ENCODE measurements at regions of chr10 and their contacts with region 1.

Region 1: DNA sequence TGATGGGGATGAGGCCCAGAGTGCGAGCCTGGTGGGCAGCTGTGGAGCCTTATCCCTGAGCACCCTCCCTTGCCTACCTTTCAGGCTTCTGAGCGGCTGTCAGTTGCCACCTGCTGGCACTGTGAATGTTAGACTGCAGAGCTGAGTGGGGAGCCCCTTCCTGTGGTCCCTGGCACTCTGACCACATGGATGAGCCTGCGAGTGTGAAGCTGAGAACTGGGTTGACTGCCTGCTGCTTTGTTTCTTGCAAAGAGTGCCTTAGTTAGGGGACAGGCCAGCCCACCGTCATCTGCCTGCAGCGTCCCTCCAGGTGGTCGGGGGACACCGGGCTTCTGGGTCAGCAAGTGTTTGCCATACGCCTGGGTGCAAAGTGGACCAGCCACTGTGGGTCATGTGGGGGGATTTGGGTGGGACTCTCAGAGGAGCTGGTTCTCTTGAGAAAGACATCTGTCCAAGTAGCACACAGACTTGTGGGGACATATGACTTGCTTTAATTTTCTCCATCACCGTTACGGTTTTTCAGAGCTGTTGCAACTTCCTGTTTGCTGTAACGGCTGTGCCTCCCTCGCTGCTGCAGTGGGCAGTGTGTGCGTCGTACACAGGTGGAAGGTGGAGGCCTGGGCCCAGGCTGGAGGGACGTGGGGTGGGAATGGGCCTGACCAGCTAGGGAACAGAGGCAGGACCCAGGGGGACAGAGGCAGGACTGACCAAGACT is 13.7 kb downstream of the INPP5A start:
- DNase-seq: peak in 6 of 14 experiments; percentile 26 to 60 (median 42)
- ATAC-seq: peak; percentile 43
- H3K4me3 ChIP-seq: peak overlapping the region; percentile 27
- H3K4me3 Mint-ChIP-seq: peak overlapping the region; percentile 87
- H3K27ac ChIP-seq: no peak overlapping the region
- H3K27ac Mint-ChIP-seq: peak overlapping the region; percentile 80
- H3K4me1 ChIP-seq: peaks cover 67% of the 10 kb centered on the region
- H3K4me1 Mint-ChIP-seq: peaks cover 35% of the 10 kb centered on the region
- H3K27me3 ChIP-seq: no peaks in the 10 kb centered on the region
- H3K27me3 Mint-ChIP-seq: no peaks in the 10 kb centered on the region
- CTCF ChIP-seq: peak; percentile 37

Region 2: GRCh38 chr10:131790021-131790420 is 761.2 kb before region 1 on chr10:
- CTCF ChIA-PET with region 1: no interaction called
- POLR2A ChIA-PET with region 1: no interaction called
- intact Hi-C with region 1: no loop called
- DNase-seq: no peak
- ATAC-seq: no peak
- H3K4me3 ChIP-seq: no peak overlapping the region
- H3K4me3 Mint-ChIP-seq: no peak overlapping the region
- H3K27ac ChIP-seq: no peak overlapping the region
- H3K27ac Mint-ChIP-seq: no peak overlapping the region
- H3K4me1 ChIP-seq: no peaks in the 10 kb centered on the region
- H3K4me1 Mint-ChIP-seq: no peaks in the 10 kb centered on the region
- H3K27me3 ChIP-seq: peaks cover 0 to 4% of the 10 kb centered on the region in 2 experiments
- H3K27me3 Mint-ChIP-seq: peaks cover 26% of the 10 kb centered on the region
- CTCF ChIP-seq: no peak

Region 3: DNA sequence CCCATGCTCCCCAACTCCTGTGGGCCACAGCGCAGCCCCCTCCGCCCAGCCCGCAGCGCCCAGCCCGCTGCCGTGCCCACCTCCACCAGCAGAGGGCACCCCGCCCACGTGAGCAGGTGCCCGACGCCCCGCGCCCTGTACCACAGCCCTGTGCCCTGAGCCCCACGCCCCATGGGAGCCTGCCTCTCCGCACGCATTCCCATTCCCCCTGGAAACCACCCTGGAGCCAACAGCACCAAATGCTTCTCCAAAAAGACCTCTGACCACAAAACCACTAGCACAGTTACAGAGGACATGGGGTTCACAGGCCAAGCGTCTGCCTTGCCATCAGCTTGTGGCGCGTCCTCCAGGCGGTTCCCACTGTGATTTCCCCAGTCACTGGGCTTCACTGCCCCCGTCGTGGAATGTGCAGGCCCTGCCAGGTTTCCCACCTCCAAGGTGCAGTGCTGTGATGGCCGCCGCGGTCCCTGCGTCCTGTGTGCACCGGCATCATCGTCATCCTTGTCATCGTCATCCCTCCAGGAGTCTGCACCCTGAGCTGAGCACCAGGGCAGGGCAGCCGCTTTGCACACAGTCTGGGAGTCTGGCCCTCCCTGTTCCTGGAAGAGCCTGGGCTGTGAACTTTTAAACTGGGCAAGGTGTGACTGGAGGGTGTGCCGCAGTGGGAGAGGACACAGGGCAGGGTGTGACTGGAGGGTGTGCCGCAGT is 92.5 kb before region 1 on chr10:
- CTCF ChIA-PET with region 1: no interaction called
- POLR2A ChIA-PET with region 1: no interaction called
- intact Hi-C with region 1: loop called in 1 of 2 experiments (anchors 5 kb)
- DNase-seq: peak; percentile 43 to 83 (median 64)
- ATAC-seq: peak; percentile 94
- H3K4me3 ChIP-seq: no peak overlapping the region
- H3K4me3 Mint-ChIP-seq: no peak overlapping the region
- H3K27ac ChIP-seq: no peak overlapping the region
- H3K27ac Mint-ChIP-seq: no peak overlapping the region
- H3K4me1 ChIP-seq: peaks cover 8% of the 10 kb centered on the region
- H3K4me1 Mint-ChIP-seq: no peaks in the 10 kb centered on the region
- H3K27me3 ChIP-seq: no peaks in the 10 kb centered on the region
- H3K27me3 Mint-ChIP-seq: no peaks in the 10 kb centered on the region
- CTCF ChIP-seq: peak; percentile 88

Region 4: GRCh38 chr10:132482090-132482800 is 69.0 kb before region 1 on chr10:
- CTCF ChIA-PET with region 1: no interaction called
- POLR2A ChIA-PET with region 1: no interaction called
- intact Hi-C with region 1: no loop called
- DNase-seq: no peak
- ATAC-seq: no peak
- H3K4me3 ChIP-seq: no peak overlapping the region
- H3K4me3 Mint-ChIP-seq: no peak overlapping the region
- H3K27ac ChIP-seq: no peak overlapping the region
- H3K27ac Mint-ChIP-seq: no peak overlapping the region
- H3K4me1 ChIP-seq: no peaks in the 10 kb centered on the region
- H3K4me1 Mint-ChIP-seq: no peaks in the 10 kb centered on the region
- H3K27me3 ChIP-seq: peaks cover 0 to 2% of the 10 kb centered on the region in 2 experiments
- H3K27me3 Mint-ChIP-seq: peaks cover 7% of the 10 kb centered on the region
- CTCF ChIP-seq: no peak

Region 5: GRCh38 chr10:133590226-133590969 is 1039.1 kb after region 1 on chr10:
- CTCF ChIA-PET with region 1: no interaction called
- POLR2A ChIA-PET with region 1: no interaction called
- intact Hi-C with region 1: no loop called
- DNase-seq: no peak
- ATAC-seq: no peak
- H3K4me3 ChIP-seq: no peak overlapping the region
- H3K4me3 Mint-ChIP-seq: no peak overlapping the region
- H3K27ac ChIP-seq: no peak overlapping the region
- H3K27ac Mint-ChIP-seq: no peak overlapping the region
- H3K4me1 ChIP-seq: no peaks in the 10 kb centered on the region
- H3K4me1 Mint-ChIP-seq: no peaks in the 10 kb centered on the region
- H3K27me3 ChIP-seq: peaks cover 2 to 4% of the 10 kb centered on the region in 2 experiments
- H3K27me3 Mint-ChIP-seq: peaks cover 23% of the 10 kb centered on the region
- CTCF ChIP-seq: no peak

Measured in CD4-positive, alpha-beta T cell (primary cell).